ENCODE measurements at regions of chr1 and their contacts with region 1.

Region 1: DNA sequence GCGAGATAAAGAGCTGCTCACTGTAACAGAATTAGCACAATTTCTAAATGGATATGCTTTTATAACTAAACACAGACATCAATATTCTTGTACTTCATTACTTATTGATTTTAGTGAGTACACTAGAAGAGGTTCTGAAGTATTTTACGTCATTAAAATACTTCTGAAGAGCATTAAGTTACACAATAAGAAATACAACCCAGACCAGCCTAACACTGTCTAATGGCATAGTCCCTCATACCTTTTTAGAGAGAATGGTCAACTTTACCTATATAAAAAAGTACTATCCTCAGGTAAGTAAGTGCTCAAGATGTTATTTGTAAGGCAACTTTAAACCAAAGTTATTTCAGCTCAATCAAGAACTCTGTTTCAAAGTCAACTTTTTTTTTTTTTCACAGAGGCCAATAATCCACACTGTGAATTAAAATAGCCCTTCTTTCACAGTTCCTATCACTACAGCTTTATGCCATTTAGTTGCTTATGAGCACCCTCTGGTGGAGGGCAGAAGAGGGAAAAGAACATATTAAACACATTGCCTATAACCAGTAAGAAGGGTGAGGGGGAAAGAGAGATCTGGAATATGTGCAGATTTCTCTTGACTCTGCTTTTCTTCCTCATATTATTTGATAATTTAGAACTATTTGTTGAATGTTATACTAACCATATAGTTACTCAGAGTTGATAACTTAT is 182.1 kb upstream of the DMRTA2 start:
- DNase-seq: peak; percentile 29
- CTCF ChIP-seq: peak; percentile 46

Region 2: DNA sequence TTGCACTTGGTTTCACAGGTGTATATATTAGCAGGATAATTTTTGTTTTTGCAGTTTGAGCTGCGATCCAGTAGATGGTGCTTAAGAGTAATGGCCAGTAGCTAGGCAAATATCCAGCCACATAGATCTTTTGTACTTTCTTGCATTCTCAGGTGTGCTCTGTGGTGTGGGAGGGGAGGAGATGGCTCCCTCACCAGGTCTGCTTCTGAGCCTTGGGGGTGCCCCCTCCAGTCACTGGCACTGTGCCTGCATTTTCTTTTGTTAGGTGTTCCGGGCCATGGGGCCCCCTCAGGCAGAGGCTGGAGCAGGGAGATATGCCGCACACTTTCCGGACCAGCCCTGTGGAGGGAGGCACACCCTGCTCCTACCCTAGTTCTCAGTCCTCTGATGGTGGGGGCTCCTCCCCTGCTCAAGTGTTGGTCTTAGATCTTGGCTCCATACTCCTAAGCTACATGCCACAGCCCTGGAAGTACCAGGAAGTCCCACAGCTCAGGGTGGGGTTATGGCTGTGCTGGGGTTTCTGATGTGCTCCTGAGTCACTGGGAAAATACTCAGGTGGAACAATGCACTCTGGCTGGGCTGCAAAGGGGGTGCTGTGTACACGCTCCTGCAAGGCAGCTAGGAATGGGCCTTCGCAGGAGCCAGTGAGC is 15.5 kb after region 1 on chr1:
- CTCF ChIA-PET with region 1: interaction called, 12 read pairs
- POLR2A ChIA-PET with region 1: no interaction called
- DNase-seq: no peak
- CTCF ChIP-seq: no peak